ENCODE measurements at regions of chr6 and their contacts with region 1.

Region 1: DNA sequence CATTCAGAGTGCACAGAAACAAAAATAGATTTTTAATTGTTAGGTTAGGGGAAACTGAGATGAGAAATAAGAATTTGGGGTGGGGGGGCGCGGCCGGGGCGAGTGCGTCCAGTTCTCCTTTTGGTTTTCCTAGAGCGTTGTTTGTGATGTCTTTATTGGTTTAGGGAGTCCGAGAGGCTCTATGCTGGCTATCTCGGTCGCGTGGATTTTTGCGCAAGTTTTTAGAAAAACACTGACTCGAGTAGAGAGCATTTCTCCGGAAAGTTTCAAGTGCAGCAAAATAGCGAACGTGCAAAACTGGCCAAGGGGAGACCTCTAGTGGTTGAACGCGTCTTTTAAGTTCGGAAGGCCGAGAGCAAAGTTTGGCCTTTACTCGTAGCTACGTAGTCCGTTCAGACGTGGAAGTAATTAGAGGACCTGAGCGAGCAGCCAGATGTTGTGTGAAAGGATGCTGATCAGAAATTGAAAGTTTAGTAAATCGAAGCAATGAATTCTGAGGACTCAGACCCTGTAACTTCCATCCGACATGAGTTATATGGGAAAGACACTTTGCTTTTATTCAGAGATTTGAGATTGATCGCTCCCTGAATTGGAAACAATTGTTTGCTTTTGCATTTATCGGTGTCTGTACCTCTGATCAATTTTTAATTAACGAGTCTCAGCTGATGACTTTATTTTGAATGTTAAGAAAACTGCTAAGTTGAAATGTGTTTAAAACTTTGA is 2.7 kb downstream of the L3MBTL3 start:
- DNase-seq: peak; percentile 72 to 84 (median 77)
- ATAC-seq: peak; percentile 72 to 91 (median 85)
- H3K4me3 ChIP-seq: peak overlapping the region; percentile 52 to 96 (median 84)
- H3K27ac ChIP-seq: peak overlapping the region in 11 of 12 donors; percentile 50 to 93 (median 76)
- H3K4me1 ChIP-seq: peaks cover 0 to 10% (median 2%) of the 10 kb centered on the region in 12 donors
- H3K27me3 ChIP-seq: no peaks in the 10 kb centered on the region
- CTCF ChIP-seq: peak; percentile 64 to 86 (median 78)
- POLR2A ChIP-seq: no peak

Region 2: GRCh38 chr6:129498950-129499842 is 521.9 kb before region 1 on chr6:
- intact Hi-C with region 1: loop called in 3 of 10 experiments (anchors 5 to 10 kb)
- DNase-seq: peak in 1 of 5 donors; percentile 49
- ATAC-seq: peak in 2 of 4 donors; percentile 25 to 35
- H3K4me3 ChIP-seq: no peak overlapping the region
- H3K27ac ChIP-seq: peak overlapping the region in 1 of 12 donors; percentile 7
- H3K4me1 ChIP-seq: peaks cover 0 to 53% (median 28%) of the 10 kb centered on the region in 12 donors
- H3K27me3 ChIP-seq: no peaks in the 10 kb centered on the region
- CTCF ChIP-seq: peak; percentile 39 to 70 (median 65)
- POLR2A ChIP-seq: no peak

Region 3: GRCh38 chr6:129575378-129576118 is 445.5 kb before region 1 on chr6:
- intact Hi-C with region 1: no loop called
- DNase-seq: no peak
- ATAC-seq: peak; percentile 47 to 72 (median 70)
- H3K4me3 ChIP-seq: peak overlapping the region in 9 of 12 donors; percentile 11 to 47 (median 30)
- H3K27ac ChIP-seq: peak overlapping the region in 1 of 12 donors; percentile 23
- H3K4me1 ChIP-seq: peaks cover 0 to 8% (median 0%) of the 10 kb centered on the region in 12 donors
- H3K27me3 ChIP-seq: no peaks in the 10 kb centered on the region
- CTCF ChIP-seq: peak; percentile 56 to 82 (median 66)
- POLR2A ChIP-seq: no peak

Region 4: DNA sequence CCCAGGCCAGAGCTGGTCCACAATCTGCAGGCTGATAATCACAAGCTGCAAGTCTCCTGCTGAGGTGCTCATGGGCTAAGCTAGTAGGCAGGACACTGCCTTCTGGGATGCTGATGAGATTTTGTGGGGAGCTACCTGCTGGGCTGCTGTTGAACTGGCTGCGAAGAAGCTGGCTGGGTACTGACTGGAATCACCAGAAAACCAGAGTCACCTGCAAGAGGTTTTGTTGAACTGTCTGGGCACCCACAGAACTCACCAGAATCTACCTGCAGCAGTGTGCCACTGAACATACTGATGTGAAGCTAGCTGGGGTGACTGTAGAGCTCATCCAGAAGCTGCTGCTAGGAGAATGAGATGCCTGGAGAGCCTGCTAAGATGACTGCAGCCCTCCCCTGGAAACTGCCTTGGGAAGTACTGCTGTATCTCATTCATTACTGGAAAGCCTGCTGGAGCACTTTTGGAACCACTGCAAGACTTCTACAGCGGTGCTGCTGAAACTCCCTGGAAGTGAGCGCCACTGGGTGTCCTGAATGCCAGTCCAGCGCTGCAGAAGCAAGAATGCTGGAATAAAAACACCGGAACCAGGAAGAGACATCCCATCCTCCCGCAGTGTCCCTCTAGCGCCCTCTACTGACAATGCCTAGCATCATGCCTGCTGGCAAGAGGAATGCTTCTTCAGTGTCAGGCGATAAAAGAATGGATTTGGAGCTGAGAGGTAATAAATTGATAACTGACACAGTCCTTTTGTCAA is 246.2 kb before region 1 on chr6:
- intact Hi-C with region 1: loop called in 2 of 10 experiments (anchors 5 to 10 kb)
- DNase-seq: peak; percentile 60 to 71 (median 66)
- ATAC-seq: peak in 3 of 4 donors; percentile 58 to 83 (median 78)
- H3K4me3 ChIP-seq: peak overlapping the region in 4 of 12 donors; percentile 10 to 31 (median 28)
- H3K27ac ChIP-seq: no peak overlapping the region
- H3K4me1 ChIP-seq: peaks cover 0 to 4% (median 0%) of the 10 kb centered on the region in 12 donors
- H3K27me3 ChIP-seq: peaks cover 0 to 21% (median 0%) of the 10 kb centered on the region in 9 donors
- CTCF ChIP-seq: peak; percentile 79 to 93 (median 90)
- POLR2A ChIP-seq: no peak

Region 5: DNA sequence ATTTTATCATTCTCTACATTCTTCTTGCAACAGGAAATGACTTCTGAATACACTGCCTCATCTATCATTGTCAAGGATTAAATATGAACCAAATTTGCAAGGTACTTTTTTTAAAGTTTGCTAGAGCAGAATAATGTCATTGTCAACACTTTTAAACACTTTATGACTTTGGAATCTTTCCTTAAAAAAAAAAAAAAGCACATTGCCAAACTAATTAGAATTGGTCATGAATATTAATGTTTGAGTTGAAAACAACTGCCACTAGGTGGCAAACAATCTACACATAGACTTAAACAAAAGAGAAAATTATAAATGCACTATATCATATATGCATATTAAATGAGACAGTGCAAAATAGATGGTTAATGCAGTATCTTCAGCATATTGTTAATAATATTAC is 127.4 kb before region 1 on chr6:
- intact Hi-C with region 1: loop called in 8 of 10 experiments (anchors 2 to 10 kb)
- DNase-seq: no peak
- ATAC-seq: no peak
- H3K4me3 ChIP-seq: no peak overlapping the region
- H3K27ac ChIP-seq: no peak overlapping the region
- H3K4me1 ChIP-seq: peaks cover 0 to 23% (median 0%) of the 10 kb centered on the region in 12 donors
- H3K27me3 ChIP-seq: no peaks in the 10 kb centered on the region
- CTCF ChIP-seq: peak in 8 of 12 donors; percentile 16 to 42 (median 32)
- POLR2A ChIP-seq: no peak

Region 6: DNA sequence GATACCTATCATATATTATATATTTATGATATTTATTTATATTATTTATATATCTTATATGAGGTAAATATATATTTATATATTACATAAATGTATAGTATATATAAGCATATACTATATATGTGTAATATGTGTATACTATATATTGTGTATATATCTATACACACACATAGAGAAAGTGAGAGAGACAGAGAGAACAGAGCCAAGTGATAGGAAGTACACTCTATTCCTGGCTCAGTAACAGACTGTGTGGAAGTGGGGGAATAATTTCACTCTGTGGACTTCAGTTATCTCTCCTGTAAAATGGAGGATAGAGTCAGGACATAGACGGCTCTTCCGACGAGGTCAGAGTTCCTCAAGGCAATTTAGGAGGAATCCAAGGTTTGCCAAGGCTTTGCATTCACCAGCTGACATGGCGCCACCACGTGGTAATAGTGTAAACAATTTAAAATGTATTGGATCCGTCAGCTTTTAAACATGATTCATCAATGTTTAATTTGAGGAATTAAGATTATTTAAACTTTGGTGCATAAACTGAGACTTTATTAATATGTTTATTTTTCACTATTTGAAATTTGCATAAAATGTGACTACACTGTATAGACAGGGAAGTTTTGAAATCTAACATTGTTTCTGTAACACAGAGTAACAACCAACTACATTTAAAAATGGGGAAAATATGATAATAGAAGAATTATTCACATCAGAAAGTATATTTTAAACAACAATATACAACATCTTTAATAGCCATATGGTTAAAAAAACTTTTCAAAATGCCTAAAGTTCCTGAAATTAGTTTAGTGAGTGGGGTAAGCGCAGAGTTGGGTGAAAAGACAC is 84.5 kb before region 1 on chr6:
- intact Hi-C with region 1: loop called in 2 of 10 experiments (anchors 5 to 10 kb)
- DNase-seq: peak in 3 of 5 donors; percentile 25 to 47 (median 33)
- ATAC-seq: peak in 1 of 4 donors; percentile 22
- H3K4me3 ChIP-seq: no peak overlapping the region
- H3K27ac ChIP-seq: no peak overlapping the region
- H3K4me1 ChIP-seq: peaks cover 0 to 4% (median 0%) of the 10 kb centered on the region in 12 donors
- H3K27me3 ChIP-seq: peaks cover 0 to 13% (median 0%) of the 10 kb centered on the region in 9 donors
- CTCF ChIP-seq: peak in 11 of 12 donors; percentile 20 to 69 (median 54)
- POLR2A ChIP-seq: no peak

Region 7: GRCh38 chr6:129946439-129947145 is 74.5 kb before region 1 on chr6:
- intact Hi-C with region 1: loop called in 1 of 10 experiments (anchors 10 kb)
- DNase-seq: no peak
- ATAC-seq: no peak
- H3K4me3 ChIP-seq: no peak overlapping the region
- H3K27ac ChIP-seq: no peak overlapping the region
- H3K4me1 ChIP-seq: no peaks in the 10 kb centered on the region
- H3K27me3 ChIP-seq: peaks cover 0 to 9% (median 0%) of the 10 kb centered on the region in 9 donors
- CTCF ChIP-seq: no peak
- POLR2A ChIP-seq: no peak

Region 8: GRCh38 chr6:129966125-129966524 is 54.9 kb before region 1 on chr6:
- intact Hi-C with region 1: no loop called
- DNase-seq: no peak
- ATAC-seq: no peak
- H3K4me3 ChIP-seq: no peak overlapping the region
- H3K27ac ChIP-seq: no peak overlapping the region
- H3K4me1 ChIP-seq: no peaks in the 10 kb centered on the region
- H3K27me3 ChIP-seq: peaks cover 0 to 9% (median 0%) of the 10 kb centered on the region in 9 donors
- CTCF ChIP-seq: no peak
- POLR2A ChIP-seq: no peak

Measured in heart left ventricle (tissue), 16 donors.